CD14-positive monocyte (primary cell): ENCODE measurements at regions of chr9 and their contacts with region 1.

Region 1: DNA sequence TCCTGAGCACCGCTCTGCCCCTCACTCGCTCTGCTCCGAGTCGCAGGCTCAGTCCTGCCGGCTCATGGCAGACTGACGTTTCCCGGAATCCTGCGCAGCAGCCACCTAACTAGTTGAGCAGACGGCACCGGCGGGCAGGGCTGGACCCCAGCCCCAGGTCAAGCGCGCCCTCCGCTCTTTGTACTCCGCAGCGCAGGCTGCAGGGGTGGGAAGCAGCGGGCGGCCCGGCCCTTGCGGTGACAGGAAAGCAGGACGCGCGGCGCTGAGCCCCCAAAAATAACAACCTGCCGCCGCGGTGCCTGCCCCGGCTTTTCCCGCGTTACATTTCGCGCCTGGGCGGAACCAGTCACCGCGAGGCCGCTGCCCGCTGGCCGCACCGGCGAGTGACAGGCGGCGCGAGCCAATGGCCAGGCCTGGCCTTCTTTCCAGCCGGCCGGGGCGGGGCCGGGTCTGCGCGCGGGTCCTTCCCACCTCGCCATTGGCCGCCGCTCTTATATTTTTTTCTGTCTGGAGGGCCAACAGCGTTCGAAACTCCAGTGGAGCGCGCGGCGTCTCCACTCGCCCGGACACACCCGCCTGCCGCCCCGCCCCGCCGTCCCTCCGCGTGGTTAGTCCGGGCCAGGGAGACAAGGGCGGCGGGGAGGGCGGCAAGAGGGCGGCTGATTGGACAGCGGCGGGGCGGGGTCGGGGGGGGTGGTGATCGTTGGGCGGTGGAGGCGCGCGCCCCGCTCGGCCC is at the start of gene ZNF367:
- DNase-seq: peak; percentile 90 to 93 (median 92)
- H3K4me3 ChIP-seq: peak within 1 kb of the TSS; percentile 88 to 98 (median 95)
- H3K4me3 Mint-ChIP-seq: peak within 1 kb of the TSS; percentile 89 to 92
- H3K27ac ChIP-seq: peak within 1 kb of the TSS; percentile 94 to 95
- H3K27ac Mint-ChIP-seq: peak within 1 kb of the TSS; percentile 86 to 97 (median 94)
- H3K4me1 ChIP-seq: peaks cover 48 to 61% of the 10 kb centered on the region in 2 donors
- H3K4me1 Mint-ChIP-seq: peaks cover 42% of the 10 kb centered on the region
- H3K27me3 ChIP-seq: no peaks in the 10 kb centered on the region
- H3K27me3 Mint-ChIP-seq: peaks cover 0 to 3% (median 0%) of the 10 kb centered on the region in 3 donors
- CTCF ChIP-seq: no peak
- polyA plus RNA-seq, gene ZNF367: 0.08 to 0.21 TPM in 2 of 3 donors, not detected in the other

Region 2: DNA sequence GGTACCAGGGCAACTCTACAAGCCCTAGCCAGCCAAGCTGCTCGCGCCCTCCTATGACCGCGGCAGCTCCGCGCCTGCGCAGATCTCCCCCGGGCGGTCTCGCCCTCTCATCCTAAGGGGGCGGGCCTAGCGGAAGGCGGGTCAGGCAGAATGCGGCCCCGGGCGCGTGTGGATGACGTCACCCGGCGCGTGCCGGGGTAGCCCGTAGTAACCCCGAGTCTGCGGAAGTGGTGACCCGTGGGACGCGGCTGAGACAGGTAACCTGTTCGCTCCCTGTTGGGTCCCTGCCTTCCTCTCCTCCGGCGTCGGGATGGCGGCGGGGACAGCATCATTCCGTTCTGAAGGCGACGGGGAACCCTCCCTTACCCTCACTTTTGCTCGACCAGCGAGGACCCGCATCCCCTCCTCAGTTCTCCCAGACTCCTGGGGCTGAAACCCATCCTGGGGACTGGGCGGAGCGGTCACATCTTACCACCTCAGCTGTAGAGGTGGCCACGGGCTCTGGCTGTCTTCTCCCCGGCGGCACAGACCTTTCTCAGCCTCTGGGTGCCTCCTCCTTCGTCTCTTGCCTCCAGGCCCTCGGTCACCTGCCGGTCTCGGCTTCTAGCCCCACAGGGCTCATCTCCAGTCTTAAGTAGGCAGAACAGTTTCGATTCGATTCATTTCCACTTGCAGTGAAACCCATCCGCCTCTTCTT is 1691.6 kb before region 1 on chr9 and contains the start of gene AOPEP:
- intact Hi-C with region 1: loop called in 1 of 2 experiments (anchors 10 kb)
- DNase-seq: peak; percentile 97 to 98 (median 98)
- H3K4me3 ChIP-seq: peak within 1 kb of the TSS; percentile 77 to 96 (median 93)
- H3K4me3 Mint-ChIP-seq: peak within 1 kb of the TSS; percentile 96
- H3K27ac ChIP-seq: peak within 1 kb of the TSS; percentile 85 to 87
- H3K27ac Mint-ChIP-seq: peak within 1 kb of the TSS; percentile 92 to 98 (median 97)
- H3K4me1 ChIP-seq: peaks cover 12 to 15% of the 10 kb centered on the region in 2 donors
- H3K4me1 Mint-ChIP-seq: peaks cover 13% of the 10 kb centered on the region
- H3K27me3 ChIP-seq: no peaks in the 10 kb centered on the region
- H3K27me3 Mint-ChIP-seq: peaks cover 0 to 8% (median 4%) of the 10 kb centered on the region in 3 donors
- CTCF ChIP-seq: no peak
- polyA plus RNA-seq, gene AOPEP: 3.0 to 4.1 (median 3.1) TPM

Region 3: DNA sequence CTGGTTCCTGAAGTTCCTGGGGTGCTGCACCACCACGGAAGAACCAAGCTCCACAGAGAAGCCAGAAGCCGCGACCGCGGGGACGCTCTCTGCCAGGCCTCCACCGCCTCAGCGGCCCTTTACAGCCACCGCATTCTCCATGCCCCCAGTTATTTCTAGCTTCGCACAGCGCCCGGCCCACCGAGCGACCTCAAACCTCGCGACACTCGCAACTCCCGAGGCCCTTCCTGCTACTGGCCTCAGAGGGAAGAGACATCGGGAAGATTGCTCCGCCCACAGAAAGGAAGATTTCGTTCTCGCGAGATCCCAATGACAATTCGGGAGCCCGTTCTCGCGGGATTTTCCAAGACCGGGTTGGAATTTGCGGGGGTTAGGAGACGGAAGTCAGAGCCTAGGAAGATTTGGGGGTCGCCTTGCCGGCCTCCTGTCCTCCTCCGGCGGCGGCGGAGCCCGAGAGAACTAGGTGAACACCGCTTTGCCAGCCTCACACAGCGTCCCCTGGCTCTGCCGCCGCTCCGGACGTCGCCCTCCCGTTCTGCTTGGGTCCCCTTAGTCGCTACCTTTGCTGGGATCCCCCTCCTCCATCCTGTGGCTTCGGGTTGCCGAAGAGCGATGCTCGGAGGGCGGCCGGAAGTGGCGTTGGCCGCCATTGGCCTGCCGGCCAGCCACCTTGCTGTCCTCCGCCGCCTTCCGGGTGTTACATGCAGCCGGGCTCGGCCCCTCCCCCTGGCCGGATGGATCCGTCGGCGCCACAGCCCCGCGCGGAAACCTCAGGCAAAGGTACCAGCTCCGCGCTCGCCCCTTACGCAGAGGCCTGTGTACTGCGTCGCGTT is 542.7 kb before region 1 on chr9 and contains the start of gene ERCC6L2:
- intact Hi-C with region 1: loop called in 1 of 2 experiments (anchors 10 kb)
- DNase-seq: peak; percentile 94 to 96 (median 95)
- H3K4me3 ChIP-seq: peak within 1 kb of the TSS in 2 of 3 experiments; percentile 89 to 98
- H3K4me3 Mint-ChIP-seq: peak within 1 kb of the TSS in 1 of 2 donors; percentile 96
- H3K27ac ChIP-seq: peak within 1 kb of the TSS; percentile 99
- H3K27ac Mint-ChIP-seq: peak within 1 kb of the TSS in 6 of 7 donors; percentile 99 to 100 (median 100)
- H3K4me1 ChIP-seq: peaks cover 6 to 9% of the 10 kb centered on the region in 2 donors
- H3K4me1 Mint-ChIP-seq: peaks cover 12% of the 10 kb centered on the region
- H3K27me3 ChIP-seq: no peaks in the 10 kb centered on the region
- H3K27me3 Mint-ChIP-seq: no peaks in the 10 kb centered on the region
- CTCF ChIP-seq: no peak
- polyA plus RNA-seq, gene ERCC6L2: 7.1 to 18.9 (median 7.2) TPM

Region 4: GRCh38 chr9:96109680-96110351 is 308.4 kb before region 1 on chr9:
- intact Hi-C with region 1: no loop called
- DNase-seq: peak; percentile 17 to 50 (median 36)
- H3K4me3 ChIP-seq: no peak overlapping the region
- H3K4me3 Mint-ChIP-seq: no peak overlapping the region
- H3K27ac ChIP-seq: no peak overlapping the region
- H3K27ac Mint-ChIP-seq: peak overlapping the region in 2 of 7 donors; percentile 18 to 57
- H3K4me1 ChIP-seq: peaks cover 12 to 16% of the 10 kb centered on the region in 2 donors
- H3K4me1 Mint-ChIP-seq: peaks cover 15% of the 10 kb centered on the region
- H3K27me3 ChIP-seq: no peaks in the 10 kb centered on the region
- H3K27me3 Mint-ChIP-seq: peaks cover 0 to 3% (median 1%) of the 10 kb centered on the region in 3 donors
- CTCF ChIP-seq: no peak

Region 5: GRCh38 chr9:96449845-96450612 is 31.8 kb after region 1 on chr9 and contains the start of gene HABP4:
- intact Hi-C with region 1: loop called (anchors 5 kb)
- DNase-seq: peak; percentile 91 to 95 (median 91)
- H3K4me3 ChIP-seq: peak within 1 kb of the TSS; percentile 28 to 75 (median 50)
- H3K4me3 Mint-ChIP-seq: peak within 1 kb of the TSS; percentile 86 to 92
- H3K27ac ChIP-seq: no peak within 1 kb of the TSS
- H3K27ac Mint-ChIP-seq: peak within 1 kb of the TSS in 5 of 7 donors; percentile 8 to 91 (median 54)
- H3K4me1 ChIP-seq: peaks cover 14 to 20% of the 10 kb centered on the region in 2 donors
- H3K4me1 Mint-ChIP-seq: peaks cover 14% of the 10 kb centered on the region
- H3K27me3 ChIP-seq: peaks cover 31 to 45% of the 10 kb centered on the region in 2 donors
- H3K27me3 Mint-ChIP-seq: peaks cover 45 to 74% (median 59%) of the 10 kb centered on the region in 3 donors
- CTCF ChIP-seq: no peak
- polyA plus RNA-seq, gene HABP4: 0.54 to 0.97 (median 0.68) TPM

Region 6: DNA sequence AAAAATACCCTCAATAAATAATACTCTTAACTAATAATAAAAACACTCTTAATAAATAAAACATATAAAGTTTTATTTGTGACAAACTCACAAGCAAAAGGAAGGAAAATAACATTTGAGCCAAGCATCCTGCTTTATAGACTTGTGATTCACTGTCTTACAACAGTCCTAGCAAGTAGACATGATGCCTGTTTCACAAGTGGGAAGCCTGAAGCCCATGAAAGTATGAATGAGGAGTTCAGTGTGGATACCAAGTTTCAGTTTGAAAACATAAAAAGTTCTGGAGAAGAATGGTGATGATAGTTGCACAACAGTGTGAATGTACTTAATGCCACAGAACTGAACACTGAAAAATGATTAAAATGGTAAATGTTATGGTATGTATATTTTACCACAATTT is 42.6 kb after region 1 on chr9:
- intact Hi-C with region 1: no loop called
- DNase-seq: no peak
- H3K4me3 ChIP-seq: no peak overlapping the region
- H3K4me3 Mint-ChIP-seq: no peak overlapping the region
- H3K27ac ChIP-seq: no peak overlapping the region
- H3K27ac Mint-ChIP-seq: no peak overlapping the region
- H3K4me1 ChIP-seq: no peaks in the 10 kb centered on the region
- H3K4me1 Mint-ChIP-seq: no peaks in the 10 kb centered on the region
- H3K27me3 ChIP-seq: no peaks in the 10 kb centered on the region
- H3K27me3 Mint-ChIP-seq: peaks cover 2 to 12% (median 2%) of the 10 kb centered on the region in 3 donors
- CTCF ChIP-seq: no peak

Region 7: DNA sequence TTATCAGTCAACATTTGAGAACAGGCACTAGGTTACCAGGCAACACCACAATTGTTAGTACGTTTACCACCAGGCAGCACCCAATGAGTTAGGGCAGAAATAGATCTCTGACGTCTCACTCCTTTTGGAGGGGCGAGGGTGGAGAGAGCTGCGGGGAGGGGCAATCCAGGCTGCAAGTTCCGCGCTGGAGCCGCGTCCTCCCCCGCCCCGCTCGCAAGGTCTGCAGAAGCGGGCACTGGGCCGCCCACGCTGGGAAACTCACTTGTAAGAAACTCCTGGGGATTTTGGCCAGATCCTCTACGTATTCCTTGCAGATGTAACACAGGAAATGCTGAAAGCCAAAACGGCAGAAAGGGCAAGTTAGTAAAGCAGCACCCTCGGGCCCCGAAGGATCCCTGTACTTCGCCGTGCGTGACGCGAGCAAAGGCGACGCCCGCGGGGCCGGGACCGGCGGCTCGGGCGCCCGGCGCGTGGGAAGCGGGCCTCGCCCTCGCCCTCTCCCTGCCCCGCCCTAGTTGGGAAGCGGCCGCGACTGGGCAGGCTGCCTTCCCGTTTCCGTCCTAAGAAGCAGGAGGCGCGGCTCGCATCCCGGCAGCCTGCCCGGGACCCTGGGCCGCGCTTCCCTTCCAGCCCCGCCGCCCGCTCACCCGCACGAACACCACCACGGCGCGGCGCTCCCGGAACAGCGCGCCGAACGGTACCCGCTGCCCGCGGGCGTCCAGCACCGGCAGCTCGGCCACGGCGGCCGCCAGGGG is 236.4 kb after region 1 on chr9:
- intact Hi-C with region 1: loop called in 1 of 2 experiments (anchors 10 kb)
- DNase-seq: peak; percentile 48 to 78 (median 75)
- H3K4me3 ChIP-seq: peak overlapping the region; percentile 45 to 80 (median 55)
- H3K4me3 Mint-ChIP-seq: peak overlapping the region; percentile 87 to 95
- H3K27ac ChIP-seq: peak overlapping the region; percentile 69 to 89
- H3K27ac Mint-ChIP-seq: peak overlapping the region; percentile 91 to 97 (median 95)
- H3K4me1 ChIP-seq: peaks cover 11% of the 10 kb centered on the region in 2 donors
- H3K4me1 Mint-ChIP-seq: peaks cover 15% of the 10 kb centered on the region
- H3K27me3 ChIP-seq: no peaks in the 10 kb centered on the region
- H3K27me3 Mint-ChIP-seq: peaks cover 0 to 4% (median 1%) of the 10 kb centered on the region in 3 donors
- CTCF ChIP-seq: no peak